BJ (cell line): ENCODE measurements at regions of chr12 and their contacts with region 1.

Region 1: DNA sequence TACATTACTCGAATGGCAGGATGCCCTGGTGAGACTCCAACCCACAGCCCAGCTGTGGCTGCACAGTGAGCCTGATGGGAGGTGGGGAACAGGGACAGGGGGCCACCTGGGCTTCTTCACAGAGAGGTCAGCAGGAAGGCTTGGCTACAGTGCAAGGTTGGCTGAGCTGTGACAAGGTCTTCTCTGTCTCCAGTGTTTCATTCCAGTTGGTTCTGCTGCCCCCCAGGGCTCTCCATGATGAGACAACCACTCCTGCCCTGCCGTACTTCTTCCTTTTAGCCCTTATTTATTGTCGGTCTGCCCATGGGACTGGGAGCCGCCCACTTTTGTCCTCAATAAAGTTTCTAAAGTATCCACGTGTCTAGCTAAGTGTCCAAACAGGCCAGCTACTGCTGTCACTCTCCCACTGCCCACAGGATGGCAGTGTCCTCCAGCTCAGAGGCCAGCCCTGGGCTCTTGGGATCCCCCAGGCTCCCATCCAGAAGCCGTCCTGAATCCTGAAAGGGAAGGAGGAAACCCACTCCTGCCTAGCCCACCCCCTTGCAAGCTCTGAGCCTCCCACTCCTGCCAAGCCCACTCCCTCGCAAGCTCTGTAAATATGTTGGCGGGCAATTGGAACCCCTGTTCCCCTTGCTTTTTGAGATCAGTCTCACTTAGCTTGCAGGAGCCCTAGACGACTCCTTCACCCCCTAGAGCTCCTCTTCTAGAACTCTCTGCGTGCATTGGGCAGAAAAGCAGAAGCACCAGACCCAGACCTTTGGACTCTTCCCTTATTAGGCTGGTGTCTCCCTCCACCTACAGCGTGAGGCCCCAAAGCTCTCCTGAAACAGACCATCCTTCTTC is 5.4 kb downstream of the C1QL4 start:
- DNase-seq: no peak
- H3K4me3 ChIP-seq: no peak overlapping the region
- H3K27me3 ChIP-seq: peaks cover 7% of the 10 kb centered on the region
- CTCF ChIP-seq: peak; percentile 87

Region 2: GRCh38 chr12:49296034-49296835 is 35.4 kb before region 1 on chr12:
- CTCF ChIA-PET with region 1: interaction called, 21 read pairs
- POLR2A ChIA-PET with region 1: no interaction called
- DNase-seq: no peak
- H3K4me3 ChIP-seq: no peak overlapping the region
- H3K27me3 ChIP-seq: peaks cover 48% of the 10 kb centered on the region
- CTCF ChIP-seq: peak; percentile 74

Region 3: GRCh38 chr12:49347384-49348237 is 16.0 kb after region 1 on chr12:
- CTCF ChIA-PET with region 1: interaction called, 52 read pairs
- POLR2A ChIA-PET with region 1: no interaction called
- DNase-seq: no peak
- H3K4me3 ChIP-seq: peak overlapping the region; percentile 31
- H3K27me3 ChIP-seq: peaks cover 34% of the 10 kb centered on the region
- CTCF ChIP-seq: peak; percentile 95

Region 4: GRCh38 chr12:49403971-49404450 is 72.4 kb after region 1 on chr12:
- CTCF ChIA-PET with region 1: no interaction called
- POLR2A ChIA-PET with region 1: no interaction called
- DNase-seq: no peak
- H3K4me3 ChIP-seq: no peak overlapping the region
- H3K27me3 ChIP-seq: no peaks in the 10 kb centered on the region
- CTCF ChIP-seq: no peak

Region 5: DNA sequence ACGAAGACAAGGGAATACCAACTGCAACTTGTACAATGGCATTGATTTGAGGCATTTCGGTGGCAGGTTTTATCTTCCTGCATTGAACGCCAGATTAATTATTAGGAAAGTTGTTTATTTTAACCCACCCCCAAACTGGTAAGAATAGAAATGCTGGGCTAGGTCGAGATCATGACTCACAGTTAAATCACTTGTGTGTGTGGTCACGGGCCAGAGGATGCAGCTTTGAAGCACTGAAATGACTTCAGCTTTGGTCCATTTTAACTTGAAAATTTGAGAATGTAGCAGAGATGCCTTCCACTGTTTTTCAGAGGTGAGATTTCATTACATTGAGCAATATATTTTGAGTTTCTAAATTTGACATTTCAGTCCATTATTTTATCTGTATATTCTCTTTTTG is 183.7 kb after region 1 on chr12:
- CTCF ChIA-PET with region 1: interaction called, 71 read pairs
- POLR2A ChIA-PET with region 1: no interaction called
- DNase-seq: peak; percentile 13
- H3K4me3 ChIP-seq: no peak overlapping the region
- H3K27me3 ChIP-seq: no peaks in the 10 kb centered on the region
- CTCF ChIP-seq: no peak